ENCODE measurements at regions of chr16 and their contacts with region 1.

Region 1: GRCh38 chr16:57720142-57720575 is 15.4 kb upstream of the KATNB1 start:
- DNase-seq: peak in 7 of 10 donors; percentile 44 to 92 (median 58)

Region 2: GRCh38 chr16:57591086-57591869 is 128.9 kb before region 1 on chr16:
- intact Hi-C with region 1: loop called (anchors 1 kb)
- DNase-seq: peak; percentile 30 to 94 (median 70)

Region 3: DNA sequence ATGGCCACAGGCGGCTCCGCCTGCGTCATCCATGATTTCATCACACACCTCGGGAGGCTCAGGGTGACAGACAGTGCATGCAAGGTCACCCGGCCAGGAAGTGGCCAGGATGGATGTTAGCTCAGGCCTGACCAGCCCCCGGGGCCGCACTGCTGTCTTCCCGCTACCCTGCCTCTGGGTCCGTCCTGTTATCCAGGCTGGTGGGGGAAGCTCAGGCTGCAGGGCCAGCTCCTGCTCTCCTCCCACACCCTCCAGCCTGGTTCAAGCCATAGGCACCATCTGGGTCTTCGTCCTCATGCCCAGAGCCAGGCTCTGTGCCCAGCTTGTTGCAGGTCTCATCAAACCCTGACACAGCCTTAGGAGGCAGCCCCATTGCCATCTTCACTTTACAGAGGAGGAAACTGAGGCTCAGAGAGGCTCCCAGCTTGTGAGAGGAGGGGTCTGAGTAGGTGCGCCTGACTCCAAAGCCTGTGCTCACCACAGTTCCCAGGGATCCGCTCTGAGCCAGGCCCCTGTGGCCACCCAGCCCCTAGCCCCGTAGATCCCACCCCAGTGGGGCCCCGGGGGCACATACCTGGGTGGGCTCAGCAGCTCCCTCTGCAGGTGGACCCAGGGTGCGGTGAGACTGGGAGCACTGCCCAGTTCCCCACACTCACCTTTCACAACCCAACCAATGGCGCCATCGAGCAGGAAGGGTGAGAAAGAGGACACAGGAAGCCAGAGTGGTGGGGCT is 52.5 kb before region 1 on chr16:
- intact Hi-C with region 1: loop called (anchors 10 kb)
- DNase-seq: peak in 1 of 10 donors; percentile 70

Region 4: GRCh38 chr16:57677622-57678369 is 42.4 kb before region 1 on chr16:
- intact Hi-C with region 1: no loop called
- DNase-seq: peak in 1 of 10 donors; percentile 35

Region 5: GRCh38 chr16:57906382-57907316 is 186.5 kb after region 1 on chr16:
- intact Hi-C with region 1: no loop called
- DNase-seq: peak in 5 of 10 donors; percentile 16 to 78 (median 48)

Region 6: DNA sequence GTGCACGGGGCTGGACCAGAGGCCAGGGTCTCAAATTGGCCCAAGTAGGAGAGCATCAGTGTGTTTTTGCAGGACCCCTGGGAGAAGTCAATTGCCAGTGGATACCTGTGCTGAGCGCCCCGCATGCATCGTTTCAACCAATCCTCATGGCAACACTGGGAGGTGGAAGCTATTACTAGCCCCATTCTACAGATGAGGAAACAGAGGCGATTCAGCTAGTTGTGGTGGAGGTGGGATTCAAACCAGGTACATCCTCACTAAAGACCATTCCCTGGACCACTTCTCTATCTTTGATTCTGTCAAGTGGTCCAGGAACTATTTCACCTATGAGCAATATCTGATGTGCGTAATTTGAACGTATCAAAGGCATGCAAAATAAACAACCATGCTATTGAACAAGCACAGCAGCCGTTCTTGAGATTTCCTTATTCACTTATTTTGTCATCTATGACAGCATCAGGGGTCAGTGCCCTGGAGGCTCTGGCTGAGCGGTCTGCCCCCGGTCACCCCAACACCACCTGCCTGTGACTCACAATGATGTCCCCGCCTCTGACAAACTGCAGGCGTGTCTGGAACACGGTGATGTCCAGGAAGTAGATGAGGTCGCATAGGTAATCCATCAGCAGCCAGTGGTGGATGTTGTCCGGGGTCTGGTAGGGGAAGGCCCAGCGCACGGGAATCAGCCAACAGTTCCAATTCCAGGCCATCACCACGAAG is 196.7 kb after region 1 on chr16:
- intact Hi-C with region 1: no loop called
- DNase-seq: peak in 1 of 10 donors; percentile 40